A673 (cell line): ENCODE measurements at regions of chr9 and their contacts with region 1.

Region 1: DNA sequence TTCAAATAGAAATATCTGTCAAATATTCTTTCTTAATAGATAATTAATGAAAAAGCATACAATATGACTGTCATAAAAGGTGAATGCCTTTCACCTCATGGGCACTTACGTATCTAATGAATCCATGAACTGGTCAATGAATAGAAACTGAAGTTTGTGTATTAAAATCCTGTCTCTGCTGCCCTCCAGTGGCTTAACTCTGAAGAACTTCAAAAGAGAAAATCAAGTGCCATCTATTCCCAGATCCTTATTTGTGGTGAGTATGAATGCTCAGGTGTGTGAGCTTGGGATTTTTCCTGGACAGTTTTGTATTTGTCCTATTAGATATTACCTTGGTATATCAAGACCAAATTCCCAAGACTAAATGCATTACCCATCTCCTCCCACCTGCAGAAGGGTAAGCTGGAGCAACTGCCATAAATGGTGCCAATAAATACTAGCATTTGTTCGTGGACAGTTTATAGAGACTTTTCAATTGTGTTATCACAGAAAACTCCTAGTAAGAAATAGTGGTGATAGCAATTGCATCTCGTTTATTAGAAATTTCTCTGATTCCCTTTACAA is 44.0 kb upstream of the SVEP1 start:
- DNase-seq: peak; percentile 69
- H3K4me3 ChIP-seq: no peak overlapping the region
- H3K27ac ChIP-seq: no peak overlapping the region
- H3K4me1 ChIP-seq: peaks cover 11% of the 10 kb centered on the region
- H3K27me3 ChIP-seq: no peaks in the 10 kb centered on the region
- CTCF ChIP-seq: peak; percentile 74

Region 2: GRCh38 chr9:110427497-110428104 is 195.9 kb before region 1 on chr9:
- CTCF ChIA-PET with region 1: interaction called, 15 read pairs
- POLR2A ChIA-PET with region 1: no interaction called
- intact Hi-C with region 1: loop called (anchors 1 kb)
- DNase-seq: peak; percentile 60
- H3K4me3 ChIP-seq: no peak overlapping the region
- H3K27ac ChIP-seq: no peak overlapping the region
- H3K4me1 ChIP-seq: no peaks in the 10 kb centered on the region
- H3K27me3 ChIP-seq: no peaks in the 10 kb centered on the region
- CTCF ChIP-seq: peak; percentile 88

Region 3: DNA sequence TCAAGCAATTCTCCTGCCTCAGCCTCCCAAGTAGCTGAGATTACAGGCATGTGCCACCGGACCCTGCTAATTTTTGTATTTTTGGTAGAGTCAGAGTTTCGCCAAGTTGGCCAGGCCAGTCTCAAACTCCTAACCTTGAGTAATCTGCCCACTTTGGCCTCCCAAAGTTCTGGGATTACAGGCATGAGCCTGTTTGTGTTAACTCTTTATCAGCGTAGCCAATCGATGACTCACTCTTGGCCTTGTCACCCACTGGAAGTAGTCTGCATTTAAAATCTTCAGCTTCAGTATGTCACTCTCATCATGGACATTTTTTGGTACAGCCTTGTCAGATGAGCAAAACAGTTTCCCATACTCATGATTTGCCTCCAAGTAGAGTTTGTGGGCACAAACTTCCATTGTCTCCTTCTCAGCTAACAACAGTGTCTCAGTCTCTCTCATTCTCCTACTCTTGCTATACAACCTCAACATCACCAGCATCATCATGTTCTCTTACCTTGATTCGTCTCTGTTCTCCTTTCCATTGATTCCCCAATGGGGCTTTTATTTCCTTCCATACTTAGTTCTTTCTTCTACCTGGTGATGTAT is 67.5 kb after region 1 on chr9:
- CTCF ChIA-PET with region 1: no interaction called
- POLR2A ChIA-PET with region 1: no interaction called
- intact Hi-C with region 1: no loop called
- DNase-seq: peak; percentile 47
- H3K4me3 ChIP-seq: no peak overlapping the region
- H3K27ac ChIP-seq: no peak overlapping the region
- H3K4me1 ChIP-seq: no peaks in the 10 kb centered on the region
- H3K27me3 ChIP-seq: no peaks in the 10 kb centered on the region
- CTCF ChIP-seq: no peak